Natural killer cell (primary cell): ENCODE measurements at regions of chr1 and their contacts with region 1.

Region 1: DNA sequence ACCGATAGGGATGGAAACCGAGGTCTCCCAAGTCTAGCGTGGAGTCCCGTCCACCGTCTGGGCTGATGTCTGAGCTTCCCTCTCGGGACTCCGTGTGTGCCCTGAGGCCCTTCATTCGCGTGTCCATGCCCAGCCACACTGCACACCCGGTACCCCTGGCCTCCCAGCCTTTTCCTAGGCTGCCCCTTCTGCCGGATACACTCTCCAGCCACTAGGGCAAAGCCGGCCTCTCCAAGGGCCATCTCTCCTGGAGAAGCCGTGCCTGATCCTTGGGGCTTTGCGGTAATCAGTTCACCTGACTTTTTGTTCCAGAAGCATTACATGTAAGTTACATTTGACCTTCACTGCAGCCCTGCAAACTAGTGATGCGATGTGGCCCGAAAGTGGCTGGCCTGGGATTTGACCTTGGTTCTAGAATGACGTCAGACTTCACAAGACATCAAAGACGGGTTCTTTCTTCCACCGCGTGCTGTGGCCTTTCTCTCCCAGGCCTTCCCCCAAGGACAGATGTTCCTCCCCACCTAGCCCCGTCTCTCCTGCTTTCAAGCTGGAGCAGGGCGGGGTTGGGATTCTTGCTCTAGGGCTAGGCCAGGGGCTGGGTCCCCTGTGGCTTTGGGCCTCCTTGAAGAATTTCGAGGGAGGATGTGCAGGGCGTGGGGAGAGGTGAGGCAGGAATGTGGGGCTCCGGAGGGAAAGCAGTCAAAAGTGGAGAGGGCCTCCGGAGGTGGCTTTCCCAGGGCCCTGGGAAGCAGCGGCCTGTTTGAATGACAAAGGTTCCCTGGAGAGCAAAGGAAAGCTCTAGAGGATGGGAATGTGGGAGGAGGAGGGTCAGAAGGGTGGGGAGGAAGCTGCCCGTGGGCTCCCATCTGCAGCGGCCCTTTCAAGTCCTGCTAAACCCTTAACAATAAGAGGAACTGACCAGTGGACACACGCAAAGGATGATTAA is 49.7 kb upstream of the SLC2A1 start:
- DNase-seq: no peak
- ATAC-seq: no peak
- H3K4me3 ChIP-seq: no peak overlapping the region
- H3K4me3 Mint-ChIP-seq: no peak overlapping the region
- H3K27ac ChIP-seq: no peak overlapping the region
- H3K27ac Mint-ChIP-seq: no peak overlapping the region
- H3K4me1 ChIP-seq: no peaks in the 10 kb centered on the region
- H3K4me1 Mint-ChIP-seq: peaks cover 0 to 7% of the 10 kb centered on the region in 2 donors
- H3K27me3 ChIP-seq: no peaks in the 10 kb centered on the region
- H3K27me3 Mint-ChIP-seq: peaks cover 6 to 9% of the 10 kb centered on the region in 2 donors
- CTCF ChIP-seq: no peak

Region 2: DNA sequence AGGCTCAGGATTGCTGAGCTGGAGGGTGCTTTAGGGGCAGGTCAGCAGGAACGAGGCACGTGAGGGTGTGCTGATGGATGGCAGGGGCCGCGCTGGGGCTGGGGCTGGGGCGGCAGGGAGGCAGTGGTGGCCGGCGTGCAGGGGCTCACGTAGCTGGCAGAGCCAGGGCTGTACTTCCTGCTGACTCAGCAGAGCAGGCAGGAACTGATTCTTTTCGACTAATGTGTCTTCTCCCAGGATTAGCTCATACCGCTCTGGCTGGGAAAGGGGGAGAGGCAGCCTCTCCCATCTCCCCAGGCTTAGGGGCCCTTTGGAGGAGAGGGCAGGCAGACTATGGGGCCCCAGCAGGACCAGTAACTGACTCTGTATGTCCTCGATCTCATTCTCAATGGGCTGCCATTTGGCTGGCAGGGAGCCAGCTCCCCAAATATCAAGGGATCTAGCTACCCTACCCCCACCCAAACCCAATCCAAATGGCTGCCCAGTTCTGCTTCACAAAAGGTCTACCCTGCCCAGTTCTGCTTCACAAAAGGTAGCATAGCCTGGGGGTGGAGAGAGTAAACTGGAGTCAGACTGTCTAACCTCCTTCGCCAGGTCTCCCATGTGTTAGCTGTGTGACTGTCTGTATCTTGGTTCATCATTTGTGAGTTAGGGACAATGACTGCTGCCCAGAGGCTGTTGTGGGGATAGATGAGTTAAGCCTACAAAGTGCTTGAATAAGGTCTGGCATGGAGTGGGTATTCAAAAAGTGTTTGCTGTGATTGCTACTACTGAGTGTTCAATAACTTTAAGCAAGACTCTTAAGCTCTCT is 50.4 kb after region 1 on chr1:
- intact Hi-C with region 1: loop called (anchors 10 kb)
- DNase-seq: no peak
- ATAC-seq: peak; percentile 27 to 49 (median 49)
- H3K4me3 ChIP-seq: no peak overlapping the region
- H3K4me3 Mint-ChIP-seq: no peak overlapping the region
- H3K27ac ChIP-seq: no peak overlapping the region
- H3K27ac Mint-ChIP-seq: no peak overlapping the region
- H3K4me1 ChIP-seq: peaks cover 19% of the 10 kb centered on the region
- H3K4me1 Mint-ChIP-seq: peaks cover 24 to 38% of the 10 kb centered on the region in 2 donors
- H3K27me3 ChIP-seq: no peaks in the 10 kb centered on the region
- H3K27me3 Mint-ChIP-seq: peaks cover 10 to 13% of the 10 kb centered on the region in 2 donors
- CTCF ChIP-seq: no peak

Region 3: GRCh38 chr1:43082740-43083139 is 74.4 kb after region 1 on chr1:
- intact Hi-C with region 1: no loop called
- DNase-seq: no peak
- ATAC-seq: no peak
- H3K4me3 ChIP-seq: no peak overlapping the region
- H3K4me3 Mint-ChIP-seq: no peak overlapping the region
- H3K27ac ChIP-seq: no peak overlapping the region
- H3K27ac Mint-ChIP-seq: no peak overlapping the region
- H3K4me1 ChIP-seq: no peaks in the 10 kb centered on the region
- H3K4me1 Mint-ChIP-seq: no peaks in the 10 kb centered on the region
- H3K27me3 ChIP-seq: no peaks in the 10 kb centered on the region
- H3K27me3 Mint-ChIP-seq: peaks cover 24 to 25% of the 10 kb centered on the region in 2 donors
- CTCF ChIP-seq: no peak